ENCODE measurements at regions of chr17 and their contacts with region 1.

Region 1: DNA sequence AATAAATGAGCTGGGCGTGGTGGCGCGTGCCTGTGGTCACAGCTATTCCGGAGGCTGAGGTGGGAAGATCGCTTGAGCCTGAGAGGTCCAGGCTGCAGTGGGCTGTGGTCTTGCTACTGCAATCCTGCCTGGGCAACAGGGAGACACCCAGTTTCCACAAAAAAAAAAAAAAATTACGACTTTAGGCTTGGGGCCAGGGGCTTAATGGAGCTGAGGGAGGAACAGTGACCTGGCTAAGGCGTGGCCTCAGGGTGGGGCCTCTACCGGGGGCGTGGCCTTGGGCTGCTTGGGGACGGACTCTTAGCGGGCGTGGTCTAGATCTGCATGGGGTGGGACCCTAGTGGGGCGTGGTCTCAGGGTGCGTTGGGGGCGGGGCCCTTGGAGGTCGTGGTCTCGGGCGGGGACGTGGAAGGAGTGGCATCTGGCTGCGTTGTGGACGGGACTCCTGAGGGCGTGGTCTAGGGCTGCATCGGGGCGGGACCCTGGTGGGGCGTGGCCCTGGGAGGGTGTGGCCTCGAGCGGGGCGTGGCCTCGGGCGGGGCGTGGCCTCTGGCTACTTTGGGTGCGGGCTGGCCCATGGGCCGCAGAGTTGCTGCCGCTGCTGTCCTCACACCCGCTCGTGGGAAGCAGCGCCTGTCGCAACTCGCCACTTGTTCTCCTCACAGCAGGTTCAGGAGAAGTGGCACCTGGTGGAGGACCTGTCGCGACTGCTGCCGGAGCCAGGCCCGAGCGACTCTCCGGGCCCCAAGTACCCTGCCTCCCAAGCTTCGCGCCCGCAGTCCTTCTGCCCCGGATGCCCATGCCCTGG is 5.8 kb upstream of the C17orf99 start:
- DNase-seq: peak; percentile 99
- ATAC-seq: peak; percentile 93
- H3K4me3 Mint-ChIP-seq: no peak overlapping the region
- H3K27ac Mint-ChIP-seq: peak overlapping the region; percentile 75
- H3K4me1 Mint-ChIP-seq: peaks cover 50% of the 10 kb centered on the region
- H3K27me3 Mint-ChIP-seq: no peaks in the 10 kb centered on the region

Region 2: GRCh38 chr17:78112518-78113226 is 27.7 kb before region 1 on chr17:
- CTCF ChIA-PET with region 1: interaction called, 257 read pairs
- DNase-seq: peak; percentile 83
- ATAC-seq: peak; percentile 64
- H3K4me3 Mint-ChIP-seq: no peak overlapping the region
- H3K27ac Mint-ChIP-seq: peak overlapping the region; percentile 86
- H3K4me1 Mint-ChIP-seq: peaks cover 34% of the 10 kb centered on the region
- H3K27me3 Mint-ChIP-seq: no peaks in the 10 kb centered on the region

Region 3: DNA sequence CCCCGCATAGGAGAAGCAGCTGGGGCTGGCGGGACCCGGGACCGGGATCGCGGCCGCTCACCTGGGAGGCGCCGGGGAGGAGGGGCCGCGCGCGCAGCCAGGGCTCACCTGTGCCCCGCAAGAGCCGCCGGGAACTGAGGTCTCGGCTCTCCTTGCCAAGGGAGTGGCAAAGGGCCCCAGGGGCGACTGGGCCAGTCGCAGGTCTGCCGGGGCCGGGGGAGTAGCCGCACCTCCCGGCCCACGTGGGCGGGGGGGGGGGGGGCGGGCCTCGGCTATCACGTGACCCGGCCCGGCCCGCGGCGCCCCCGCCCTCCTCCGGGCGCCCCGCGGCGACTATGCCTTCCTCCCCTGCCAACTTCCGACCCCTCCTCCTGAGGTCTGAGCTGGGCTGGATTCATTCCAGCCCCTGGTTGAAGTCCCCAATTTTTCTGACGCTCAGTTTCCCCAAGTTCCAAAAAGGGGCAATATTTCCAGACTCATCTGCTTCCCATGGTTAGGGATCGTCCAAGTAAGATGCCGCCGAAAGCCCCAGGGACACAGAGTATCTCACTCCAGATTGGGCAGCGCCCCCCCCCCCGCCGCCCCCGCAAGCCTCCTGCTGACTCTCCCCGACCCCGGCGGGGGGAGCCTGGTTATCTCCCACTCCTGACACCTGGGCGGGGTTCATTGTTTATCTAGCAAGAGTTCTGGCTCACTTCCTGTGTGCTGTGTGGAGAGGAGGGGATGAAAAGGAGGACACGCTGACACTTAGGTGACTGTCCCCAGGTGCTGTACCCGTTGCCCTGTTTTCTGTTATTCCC is 11.6 kb before region 1 on chr17 and contains the start of gene TMC6:
- CTCF ChIA-PET with region 1: interaction called, 179 read pairs
- DNase-seq: peak; percentile 80
- ATAC-seq: peak; percentile 17
- H3K4me3 Mint-ChIP-seq: peak within 1 kb of the TSS; percentile 88
- H3K27ac Mint-ChIP-seq: peak within 1 kb of the TSS; percentile 99
- H3K4me1 Mint-ChIP-seq: peaks cover 48% of the 10 kb centered on the region
- H3K27me3 Mint-ChIP-seq: no peaks in the 10 kb centered on the region
- total RNA-seq, gene TMC6: 347 to 431 TPM

Region 4: GRCh38 chr17:78163881-78164740 is 23.7 kb after region 1 on chr17:
- CTCF ChIA-PET with region 1: interaction called, 11 read pairs
- DNase-seq: no peak
- ATAC-seq: no peak
- H3K4me3 Mint-ChIP-seq: no peak overlapping the region
- H3K27ac Mint-ChIP-seq: no peak overlapping the region
- H3K4me1 Mint-ChIP-seq: peaks cover 4% of the 10 kb centered on the region
- H3K27me3 Mint-ChIP-seq: no peaks in the 10 kb centered on the region

Region 5: DNA sequence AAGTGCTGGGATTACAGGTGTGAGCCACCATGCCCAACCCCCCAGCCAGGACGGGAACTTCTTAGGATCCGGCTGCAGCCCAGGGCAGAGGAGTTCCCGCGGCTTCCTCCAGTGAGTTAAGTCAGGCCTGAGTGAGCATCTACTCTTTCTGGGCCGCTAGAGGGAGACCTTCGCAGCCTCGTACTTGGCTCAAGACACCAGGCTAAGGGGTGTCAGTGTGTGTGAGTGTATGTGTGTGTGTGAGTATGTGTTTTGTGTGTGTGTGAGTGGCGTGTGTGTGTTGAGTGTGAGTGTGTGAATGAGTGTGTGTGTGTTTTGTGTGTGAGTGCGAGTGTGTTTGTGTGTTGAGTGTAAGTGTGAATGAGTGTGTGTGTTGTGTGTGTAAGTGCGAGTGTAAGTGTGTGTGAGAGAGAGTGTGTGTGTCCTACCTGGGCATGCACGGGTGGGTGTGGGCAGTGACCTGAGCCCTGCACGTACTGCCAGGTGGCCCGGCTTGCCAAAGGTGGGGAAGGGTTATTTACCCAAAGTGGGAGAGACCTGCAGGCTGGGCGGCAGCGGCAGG is 149.5 kb after region 1 on chr17:
- CTCF ChIA-PET with region 1: no interaction called
- DNase-seq: peak; percentile 84
- ATAC-seq: peak; percentile 99
- H3K4me3 Mint-ChIP-seq: no peak overlapping the region
- H3K27ac Mint-ChIP-seq: no peak overlapping the region
- H3K4me1 Mint-ChIP-seq: no peaks in the 10 kb centered on the region
- H3K27me3 Mint-ChIP-seq: no peaks in the 10 kb centered on the region

Region 6: DNA sequence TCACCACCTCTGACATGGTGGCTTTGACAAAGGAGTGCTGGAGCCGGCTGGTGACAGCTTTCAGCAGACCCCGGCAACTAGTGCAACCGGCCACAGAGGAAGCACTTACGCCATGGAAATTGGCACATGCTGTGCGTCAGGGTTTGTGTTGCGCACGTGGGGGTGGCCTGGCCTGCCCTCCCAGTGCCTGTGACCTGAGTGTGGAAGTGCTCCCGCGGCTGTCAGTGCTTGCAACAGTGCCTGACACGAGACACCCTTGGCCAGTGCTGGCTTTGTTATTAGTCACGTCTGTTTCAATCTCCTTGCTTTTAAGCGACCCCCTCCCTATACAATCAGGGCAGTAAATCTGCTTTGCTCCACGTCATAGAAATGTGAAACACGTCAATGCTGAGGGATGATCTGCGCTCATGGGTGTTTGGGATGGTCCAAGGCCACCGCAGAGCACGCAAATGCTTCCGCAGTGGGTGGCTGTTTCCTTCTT is 302.3 kb after region 1 on chr17:
- CTCF ChIA-PET with region 1: no interaction called
- DNase-seq: no peak
- ATAC-seq: no peak
- H3K4me3 Mint-ChIP-seq: no peak overlapping the region
- H3K27ac Mint-ChIP-seq: no peak overlapping the region
- H3K4me1 Mint-ChIP-seq: no peaks in the 10 kb centered on the region
- H3K27me3 Mint-ChIP-seq: no peaks in the 10 kb centered on the region

Measured in activated CD8-positive, alpha-beta memory T cell treated with anti-CD3 and anti-CD28 coated beads, Interleukin-2, amount 10 ng/mL, durations not matched to agents 7 days and 5 days (primary cell).